Activated naive CD4-positive, alpha-beta T cell treated with anti-CD3 and anti-CD28 coated beads for 36 hours (primary cell): ENCODE measurements at regions of chr1 and their contacts with region 1.

Region 1: GRCh38 chr1:116133696-116134650 is 22.8 kb downstream of the MAB21L3 start:
- DNase-seq: no peak
- H3K4me3 Mint-ChIP-seq: no peak overlapping the region
- H3K27ac Mint-ChIP-seq: no peak overlapping the region
- H3K4me1 Mint-ChIP-seq: peaks cover 10% of the 10 kb centered on the region
- H3K27me3 Mint-ChIP-seq: peaks cover 2% of the 10 kb centered on the region

Region 2: GRCh38 chr1:115807723-115808122 is 326.2 kb before region 1 on chr1:
- CTCF ChIA-PET with region 1: interaction called, 3 read pairs
- intact Hi-C with region 1: loop called (anchors 5 kb)
- DNase-seq: peak; percentile 67
- H3K4me3 Mint-ChIP-seq: no peak overlapping the region
- H3K27ac Mint-ChIP-seq: no peak overlapping the region
- H3K4me1 Mint-ChIP-seq: no peaks in the 10 kb centered on the region
- H3K27me3 Mint-ChIP-seq: peaks cover 20% of the 10 kb centered on the region

Region 3: DNA sequence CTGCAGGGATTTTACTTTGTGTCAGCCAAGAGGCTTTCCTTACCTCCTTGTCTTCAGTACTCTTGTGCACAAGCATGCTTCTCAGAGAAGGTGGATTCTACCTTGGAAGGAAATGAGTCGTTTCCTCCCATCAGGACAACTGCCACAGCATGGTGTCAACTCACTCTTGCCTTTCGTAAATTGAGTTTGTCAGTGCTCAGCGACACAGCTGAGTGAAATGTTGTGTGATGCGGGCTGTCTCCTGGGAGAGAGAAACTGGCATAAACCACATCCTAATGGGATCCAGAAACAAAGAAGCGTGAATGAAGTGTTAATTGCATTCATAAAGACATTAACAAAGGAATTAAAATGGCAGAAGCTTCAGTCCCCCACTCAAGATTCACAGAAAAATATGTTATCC is 209.2 kb before region 1 on chr1:
- CTCF ChIA-PET with region 1: no interaction called
- intact Hi-C with region 1: no loop called
- DNase-seq: no peak
- H3K4me3 Mint-ChIP-seq: no peak overlapping the region
- H3K27ac Mint-ChIP-seq: no peak overlapping the region
- H3K4me1 Mint-ChIP-seq: peaks cover 3% of the 10 kb centered on the region
- H3K27me3 Mint-ChIP-seq: no peaks in the 10 kb centered on the region

Region 4: DNA sequence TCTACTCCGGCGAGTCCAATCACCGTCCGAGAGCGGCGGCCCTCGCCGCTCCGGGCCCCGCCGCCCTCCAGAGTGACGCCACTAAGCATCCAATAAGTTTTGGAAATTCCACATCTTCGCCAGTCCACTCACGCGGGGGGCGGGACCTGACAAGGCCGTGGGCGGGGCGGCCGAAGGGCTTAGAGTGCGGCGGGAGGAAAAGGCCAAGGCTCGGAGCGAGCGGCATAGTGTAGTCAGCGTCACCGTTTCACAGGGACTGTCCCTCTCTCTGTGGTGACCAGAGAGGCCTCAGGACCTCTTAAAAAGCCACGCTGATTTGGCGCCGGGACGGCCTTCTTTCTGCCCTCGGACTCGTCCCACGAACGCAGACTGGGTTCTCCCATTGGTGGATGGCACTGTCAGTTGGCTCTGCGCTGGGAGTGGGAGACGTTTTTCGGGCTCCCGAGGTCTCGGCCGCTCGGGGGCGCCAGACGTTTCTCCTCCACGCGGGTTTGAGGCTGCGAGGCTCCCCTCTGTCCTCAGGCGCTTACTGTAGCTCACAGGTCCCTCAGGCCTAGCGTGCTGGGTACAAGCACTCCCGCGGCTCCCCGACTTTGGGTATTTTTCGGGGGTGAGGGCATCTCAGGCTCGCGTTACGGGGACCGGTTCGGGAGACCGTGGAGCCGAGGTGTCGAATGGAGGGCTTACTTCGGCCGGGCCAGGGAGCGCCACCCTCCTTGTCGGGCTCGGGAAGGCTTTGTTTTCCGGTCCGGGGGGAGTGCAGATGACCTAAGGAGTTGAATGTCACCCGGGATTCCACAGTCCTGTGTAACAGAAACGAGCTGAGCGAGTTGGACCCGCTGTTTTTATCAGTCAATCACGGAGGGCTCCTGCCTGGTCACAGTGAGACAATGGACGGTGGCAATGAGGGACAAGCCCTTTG is 988.1 kb after region 1 on chr1:
- CTCF ChIA-PET with region 1: no interaction called
- intact Hi-C with region 1: loop called (anchors 10 kb)
- DNase-seq: peak; percentile 90
- H3K4me3 Mint-ChIP-seq: peak overlapping the region; percentile 73
- H3K27ac Mint-ChIP-seq: no peak overlapping the region
- H3K4me1 Mint-ChIP-seq: no peaks in the 10 kb centered on the region
- H3K27me3 Mint-ChIP-seq: peaks cover 12% of the 10 kb centered on the region